ENCODE measurements at regions of chr2 and their contacts with region 1.

Region 1: DNA sequence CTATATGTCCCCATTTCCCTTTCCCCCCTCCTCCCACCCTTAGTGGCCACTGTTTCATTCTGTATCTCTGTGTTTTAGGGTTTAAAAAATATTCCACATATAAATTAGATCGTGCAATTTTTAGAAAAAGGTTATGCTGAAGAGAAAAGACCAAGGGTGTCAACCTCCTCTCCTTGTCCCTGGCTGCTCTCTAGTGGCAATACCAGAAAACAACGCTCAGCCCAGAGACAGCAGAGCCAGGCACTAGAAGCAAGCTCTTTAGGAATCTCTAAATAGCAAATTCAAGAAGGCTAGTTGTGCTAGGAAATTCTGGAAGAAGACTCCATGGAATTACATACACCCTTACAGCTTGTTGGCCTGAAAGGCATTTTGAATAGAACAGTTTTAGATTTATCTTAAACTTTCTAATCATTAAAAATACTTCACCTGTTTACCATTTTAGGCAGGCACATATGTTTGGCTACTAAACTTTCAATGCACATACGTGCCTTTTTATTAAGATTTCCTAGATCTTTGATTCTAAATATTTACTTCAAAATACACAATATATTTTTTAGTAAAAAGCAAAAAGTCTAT is 35.1 kb upstream of the RASGRP3 start:
- DNase-seq: peak; percentile 79
- H3K4me3 ChIP-seq: no peak overlapping the region
- H3K27ac ChIP-seq: no peak overlapping the region
- H3K4me1 ChIP-seq: peaks cover 19% of the 10 kb centered on the region
- H3K27me3 ChIP-seq: no peaks in the 10 kb centered on the region
- CTCF ChIP-seq: peak; percentile 74
- POLR2A ChIP-seq: no peak

Region 2: DNA sequence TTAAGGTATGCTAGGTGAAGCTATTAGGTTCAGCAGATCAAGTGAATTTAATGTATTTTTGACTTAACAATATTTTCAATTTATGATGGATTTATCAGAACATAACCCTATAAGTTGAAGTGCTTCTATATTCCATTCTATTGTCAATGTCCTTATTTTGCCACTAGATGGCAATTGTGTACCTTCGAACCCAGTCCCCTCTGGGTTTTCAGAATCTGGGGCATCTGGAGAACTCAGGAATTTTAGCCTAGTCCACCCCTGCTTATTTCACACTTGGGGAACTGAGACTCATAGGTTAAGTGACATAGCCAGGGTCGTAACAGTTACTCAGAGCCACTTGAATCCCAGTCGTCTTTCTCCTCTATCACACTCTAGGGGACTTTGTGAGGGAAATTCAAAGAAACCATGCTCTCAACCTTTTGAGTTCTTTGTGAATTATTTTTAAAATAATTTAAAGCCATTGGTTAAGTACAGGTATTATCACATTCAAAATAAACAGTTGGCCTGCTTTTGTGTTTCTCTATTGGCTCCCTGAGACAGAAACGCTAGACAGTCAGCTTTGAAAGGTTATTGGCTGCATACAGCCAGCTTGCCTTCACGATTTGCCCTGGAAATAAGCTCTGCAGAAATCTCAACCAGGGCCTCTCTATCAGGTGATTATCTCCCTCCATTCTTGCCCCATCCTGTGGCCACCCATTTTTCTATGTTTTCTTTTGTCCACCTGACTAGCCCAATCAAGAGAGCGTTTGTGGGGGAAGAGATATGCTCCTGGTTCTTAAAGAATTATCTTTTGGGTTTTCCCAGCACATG is 668.5 kb before region 1 on chr2:
- CTCF ChIA-PET with region 1: interaction called, 22 read pairs
- POLR2A ChIA-PET with region 1: no interaction called
- dilution Hi-C with region 1: no loop called
- intact Hi-C with region 1: loop called (anchors 1 kb)
- DNase-seq: peak; percentile 75
- H3K4me3 ChIP-seq: no peak overlapping the region
- H3K27ac ChIP-seq: no peak overlapping the region
- H3K4me1 ChIP-seq: peaks cover 3% of the 10 kb centered on the region
- H3K27me3 ChIP-seq: no peaks in the 10 kb centered on the region
- CTCF ChIP-seq: peak; percentile 38 to 53
- POLR2A ChIP-seq: no peak

Region 3: GRCh38 chr2:33086400-33087015 is 354.8 kb before region 1 on chr2:
- CTCF ChIA-PET with region 1: interaction called, 8 read pairs
- POLR2A ChIA-PET with region 1: no interaction called
- dilution Hi-C with region 1: no loop called
- intact Hi-C with region 1: loop called (anchors 1 kb)
- DNase-seq: peak; percentile 83
- H3K4me3 ChIP-seq: no peak overlapping the region
- H3K27ac ChIP-seq: peak overlapping the region; percentile 83
- H3K4me1 ChIP-seq: peaks cover 21% of the 10 kb centered on the region
- H3K27me3 ChIP-seq: no peaks in the 10 kb centered on the region
- CTCF ChIP-seq: no peak
- POLR2A ChIP-seq: no peak

Region 4: GRCh38 chr2:33406622-33407021 is 34.7 kb before region 1 on chr2:
- CTCF ChIA-PET with region 1: interaction called, 154 read pairs
- POLR2A ChIA-PET with region 1: interaction called, 3 read pairs
- dilution Hi-C with region 1: no loop called
- intact Hi-C with region 1: no loop called
- DNase-seq: no peak
- H3K4me3 ChIP-seq: no peak overlapping the region
- H3K27ac ChIP-seq: no peak overlapping the region
- H3K4me1 ChIP-seq: no peaks in the 10 kb centered on the region
- H3K27me3 ChIP-seq: no peaks in the 10 kb centered on the region
- CTCF ChIP-seq: no peak
- POLR2A ChIP-seq: no peak

Region 5: DNA sequence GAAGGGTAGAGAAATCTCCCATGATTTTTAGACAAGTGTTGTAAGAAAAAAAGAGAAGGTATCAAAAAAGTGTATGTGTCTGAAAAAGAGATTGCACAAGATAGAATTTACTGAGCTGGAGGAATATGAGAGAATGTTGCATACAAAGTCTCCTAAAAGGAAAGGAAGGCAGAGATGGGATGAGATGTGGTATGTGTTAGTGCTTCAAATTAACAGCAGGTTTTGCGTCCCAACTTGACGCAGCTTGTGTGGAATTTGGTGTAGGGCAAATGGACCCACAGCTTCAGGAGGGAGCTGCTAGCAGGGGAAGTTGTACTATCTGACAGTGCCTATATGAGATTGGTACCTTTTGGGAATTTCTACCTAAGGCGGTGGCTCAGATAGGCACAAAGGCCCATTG is 26.1 kb after region 1 on chr2:
- CTCF ChIA-PET with region 1: interaction called, 12 read pairs
- POLR2A ChIA-PET with region 1: interaction called, 4 read pairs
- dilution Hi-C with region 1: no loop called
- intact Hi-C with region 1: no loop called
- DNase-seq: no peak
- H3K4me3 ChIP-seq: no peak overlapping the region
- H3K27ac ChIP-seq: no peak overlapping the region
- H3K4me1 ChIP-seq: no peaks in the 10 kb centered on the region
- H3K27me3 ChIP-seq: peaks cover 0 to 2% of the 10 kb centered on the region in 2 experiments
- CTCF ChIP-seq: no peak
- POLR2A ChIP-seq: no peak

Region 6: GRCh38 chr2:33486544-33486943 is 45.2 kb after region 1 on chr2:
- CTCF ChIA-PET with region 1: no interaction called
- POLR2A ChIA-PET with region 1: no interaction called
- dilution Hi-C with region 1: no loop called
- intact Hi-C with region 1: no loop called
- DNase-seq: no peak
- H3K4me3 ChIP-seq: no peak overlapping the region
- H3K27ac ChIP-seq: no peak overlapping the region
- H3K4me1 ChIP-seq: no peaks in the 10 kb centered on the region
- H3K27me3 ChIP-seq: peaks cover 4 to 6% of the 10 kb centered on the region in 2 experiments
- CTCF ChIP-seq: no peak
- POLR2A ChIP-seq: no peak